Uterus (tissue), 4 donors: ENCODE measurements at regions of chr1 and their contacts with region 1.

Region 1: GRCh38 chr1:156096640-156097391 is 14.6 kb upstream of the MEX3A start:
- DNase-seq: peak; percentile 93
- H3K4me3 ChIP-seq: no peak overlapping the region
- H3K27ac ChIP-seq: peak overlapping the region; percentile 81 to 93
- H3K4me1 ChIP-seq: no peaks in the 10 kb centered on the region
- H3K27me3 ChIP-seq: no peaks in the 10 kb centered on the region
- CTCF ChIP-seq: peak; percentile 93 to 99 (median 98)
- POLR2A ChIP-seq: peak in 1 of 2 donors; percentile 30

Region 2: GRCh38 chr1:156129706-156130581 is 33.1 kb after region 1 on chr1:
- intact Hi-C with region 1: loop called (anchors 2 kb)
- DNase-seq: peak; percentile 92 to 94
- H3K4me3 ChIP-seq: peak overlapping the region in 1 of 2 donors; percentile 18
- H3K27ac ChIP-seq: peak overlapping the region; percentile 97 to 99
- H3K4me1 ChIP-seq: peaks cover 33 to 34% of the 10 kb centered on the region in 2 donors
- H3K27me3 ChIP-seq: no peaks in the 10 kb centered on the region
- CTCF ChIP-seq: peak; percentile 98 to 99 (median 99)
- POLR2A ChIP-seq: peak in 1 of 2 donors; percentile 55